Common myeloid progenitor, CD34-positive (primary cell): ENCODE measurements at regions of chr11 and their contacts with region 1.

Region 1: DNA sequence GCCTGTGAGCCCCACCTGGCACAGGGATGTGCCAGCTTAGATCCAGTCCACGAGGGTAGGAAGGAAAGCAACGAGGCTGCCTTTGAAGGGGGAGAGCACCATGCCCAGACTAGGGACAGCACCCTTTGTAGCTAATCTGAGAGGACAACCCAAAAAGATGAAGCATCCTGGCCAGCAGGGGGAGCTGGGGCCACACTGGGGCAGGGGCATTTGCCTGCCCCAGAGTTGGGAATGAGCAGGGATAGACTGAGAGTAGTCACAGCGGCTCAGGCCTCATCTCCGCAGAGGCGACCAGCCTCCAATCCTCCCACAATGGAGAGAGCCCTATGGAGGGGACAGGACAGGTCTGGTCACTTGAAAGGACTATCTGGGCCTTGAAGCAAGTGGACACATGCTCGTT is 16.4 kb downstream of the LMO1 start:
- DNase-seq: peak; percentile 25 to 47 (median 28)
- H3K4me3 ChIP-seq: no peak overlapping the region
- H3K27ac ChIP-seq: no peak overlapping the region
- H3K4me1 ChIP-seq: peaks cover 0 to 3% (median 0%) of the 10 kb centered on the region in 4 experiments
- H3K27me3 ChIP-seq: peaks cover 0 to 2% (median 0%) of the 10 kb centered on the region in 5 experiments

Region 2: GRCh38 chr11:8018484-8019313 is 228.6 kb before region 1 on chr11:
- CTCF ChIA-PET with region 1: no interaction called
- POLR2A ChIA-PET with region 1: no interaction called
- DNase-seq: peak; percentile 46 to 80 (median 70)
- H3K4me3 ChIP-seq: peak overlapping the region in 6 of 7 experiments; percentile 45 to 77 (median 62)
- H3K27ac ChIP-seq: no peak overlapping the region
- H3K4me1 ChIP-seq: peaks cover 2 to 19% (median 11%) of the 10 kb centered on the region in 4 experiments
- H3K27me3 ChIP-seq: peaks cover 13 to 58% (median 42%) of the 10 kb centered on the region in 5 experiments

Region 3: DNA sequence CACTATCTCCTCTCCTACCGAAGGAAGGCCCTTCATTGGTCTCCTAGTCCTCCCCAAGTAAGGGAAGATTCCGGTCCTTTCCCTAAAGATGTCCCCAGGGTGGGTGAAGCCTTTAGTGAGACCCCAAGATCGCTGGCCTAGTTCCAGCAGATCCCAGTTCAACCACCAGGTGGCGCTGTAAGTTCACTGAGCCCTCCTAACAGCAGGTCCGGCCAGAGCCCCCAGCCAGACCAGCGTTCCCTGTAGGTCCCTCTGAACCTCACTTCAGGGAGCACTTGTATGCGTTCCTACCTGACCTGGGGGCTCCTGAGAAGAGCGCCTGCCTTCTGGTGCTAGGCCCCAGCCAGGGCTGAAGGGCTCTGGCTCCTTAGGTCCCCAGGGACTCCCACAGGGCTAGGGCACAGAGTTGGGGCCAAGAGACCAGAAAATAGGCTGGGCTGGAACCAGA is 21.7 kb before region 1 on chr11:
- CTCF ChIA-PET with region 1: interaction called, 11 read pairs
- POLR2A ChIA-PET with region 1: no interaction called
- DNase-seq: peak; percentile 71 to 82 (median 71)
- H3K4me3 ChIP-seq: no peak overlapping the region
- H3K27ac ChIP-seq: no peak overlapping the region
- H3K4me1 ChIP-seq: peaks cover 0 to 18% (median 15%) of the 10 kb centered on the region in 4 experiments
- H3K27me3 ChIP-seq: peaks cover 0 to 20% (median 2%) of the 10 kb centered on the region in 5 experiments

Region 4: DNA sequence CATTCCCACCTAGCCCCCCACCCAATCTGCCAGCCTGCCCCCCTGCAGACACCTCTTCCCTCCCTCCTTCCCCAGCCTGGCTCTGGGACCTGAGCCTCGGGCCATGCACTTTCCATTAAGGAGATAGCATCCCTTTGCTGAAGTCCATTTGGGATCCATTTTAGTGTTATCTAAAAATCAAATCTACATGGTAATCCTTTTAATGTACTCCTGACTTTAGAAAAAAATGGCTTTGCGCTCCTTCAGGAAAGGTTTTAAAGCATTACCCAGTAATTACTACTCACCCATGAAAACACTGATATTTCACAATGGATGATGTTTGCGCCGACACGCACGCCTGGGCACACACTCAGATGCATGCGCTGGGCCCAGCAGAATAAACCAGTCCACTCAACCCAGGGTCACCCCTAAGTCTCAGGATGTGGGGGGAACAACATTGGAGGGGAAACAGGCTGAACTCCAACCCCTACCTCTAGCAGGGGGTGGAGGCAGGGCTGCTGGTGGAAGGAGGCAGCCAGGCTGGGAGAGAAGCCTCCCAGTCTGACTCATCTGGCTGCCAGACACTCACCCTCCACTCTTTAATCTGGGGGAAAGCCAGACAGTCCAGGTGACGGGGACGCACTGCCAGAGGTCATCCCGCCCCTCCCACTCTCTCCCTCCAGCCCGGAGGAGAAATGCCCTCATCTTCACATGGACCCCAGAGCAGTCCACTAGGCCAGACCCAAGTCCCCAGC is 13.5 kb before region 1 on chr11:
- CTCF ChIA-PET with region 1: interaction called, 17 read pairs
- POLR2A ChIA-PET with region 1: no interaction called
- DNase-seq: no peak
- H3K4me3 ChIP-seq: no peak overlapping the region
- H3K27ac ChIP-seq: no peak overlapping the region
- H3K4me1 ChIP-seq: peaks cover 0 to 14% (median 3%) of the 10 kb centered on the region in 4 experiments
- H3K27me3 ChIP-seq: peaks cover 0 to 3% (median 0%) of the 10 kb centered on the region in 5 experiments

Region 5: DNA sequence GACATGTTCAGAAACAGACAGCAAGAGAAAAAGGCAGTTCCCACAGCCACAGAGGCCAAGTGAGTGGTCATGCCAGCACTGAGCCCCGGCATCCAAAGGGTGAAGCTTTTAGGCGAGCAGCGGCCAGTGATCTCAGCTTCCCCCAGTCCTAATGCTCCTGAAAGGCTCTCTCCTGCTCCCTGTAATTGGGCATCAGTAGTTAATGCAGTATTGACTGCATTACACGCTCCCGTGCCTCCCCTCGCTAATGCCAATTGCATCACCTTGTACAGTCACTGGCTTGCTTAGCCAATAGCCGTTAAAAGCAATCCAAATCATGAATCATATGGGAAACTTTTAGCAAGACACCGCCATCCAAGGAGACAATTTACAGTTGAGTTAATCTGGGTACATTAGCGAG is 11.5 kb after region 1 on chr11:
- CTCF ChIA-PET with region 1: interaction called, 99 read pairs
- POLR2A ChIA-PET with region 1: interaction called, 3 read pairs
- DNase-seq: peak; percentile 39 to 80 (median 77)
- H3K4me3 ChIP-seq: peak overlapping the region in 1 of 7 experiments; percentile 28
- H3K27ac ChIP-seq: no peak overlapping the region
- H3K4me1 ChIP-seq: peaks cover 4 to 44% (median 40%) of the 10 kb centered on the region in 4 experiments
- H3K27me3 ChIP-seq: peaks cover 0 to 21% (median 15%) of the 10 kb centered on the region in 5 experiments